Activated CD4-positive, alpha-beta T cell treated with anti-CD3 and anti-CD28 coated beads, Interleukin-2, amount 10 ng/mL, durations not matched to agents 24 days and 14 days (primary cell): ENCODE measurements at regions of chr7 and their contacts with region 1.

Region 1: GRCh38 chr7:48904975-48905374 is 19.4 kb upstream of the CDC14C start:
- DNase-seq: no peak
- H3K4me3 Mint-ChIP-seq: no peak overlapping the region
- H3K27ac Mint-ChIP-seq: no peak overlapping the region
- H3K4me1 Mint-ChIP-seq: no peaks in the 10 kb centered on the region
- H3K27me3 Mint-ChIP-seq: no peaks in the 10 kb centered on the region

Region 2: GRCh38 chr7:48868916-48869315 is 36.1 kb before region 1 on chr7:
- intact Hi-C with region 1: loop called (anchors 5 kb)
- DNase-seq: no peak
- H3K4me3 Mint-ChIP-seq: no peak overlapping the region
- H3K27ac Mint-ChIP-seq: no peak overlapping the region
- H3K4me1 Mint-ChIP-seq: no peaks in the 10 kb centered on the region
- H3K27me3 Mint-ChIP-seq: no peaks in the 10 kb centered on the region

Region 3: GRCh38 chr7:48992816-48993215 is 87.8 kb after region 1 on chr7:
- intact Hi-C with region 1: no loop called
- DNase-seq: no peak
- H3K4me3 Mint-ChIP-seq: no peak overlapping the region
- H3K27ac Mint-ChIP-seq: no peak overlapping the region
- H3K4me1 Mint-ChIP-seq: no peaks in the 10 kb centered on the region
- H3K27me3 Mint-ChIP-seq: no peaks in the 10 kb centered on the region